MCF 10A (cell line): ENCODE measurements at regions of chr2 and their contacts with region 1.

Region 1: GRCh38 chr2:199339891-199340605 is 117.7 kb downstream of the SATB2 start:
- DNase-seq: no peak
- H3K4me3 Mint-ChIP-seq: no peak overlapping the region
- H3K27ac Mint-ChIP-seq: no peak overlapping the region
- H3K4me1 Mint-ChIP-seq: no peaks in the 10 kb centered on the region
- H3K27me3 Mint-ChIP-seq: no peaks in the 10 kb centered on the region
- CTCF ChIP-seq: no peak

Region 2: DNA sequence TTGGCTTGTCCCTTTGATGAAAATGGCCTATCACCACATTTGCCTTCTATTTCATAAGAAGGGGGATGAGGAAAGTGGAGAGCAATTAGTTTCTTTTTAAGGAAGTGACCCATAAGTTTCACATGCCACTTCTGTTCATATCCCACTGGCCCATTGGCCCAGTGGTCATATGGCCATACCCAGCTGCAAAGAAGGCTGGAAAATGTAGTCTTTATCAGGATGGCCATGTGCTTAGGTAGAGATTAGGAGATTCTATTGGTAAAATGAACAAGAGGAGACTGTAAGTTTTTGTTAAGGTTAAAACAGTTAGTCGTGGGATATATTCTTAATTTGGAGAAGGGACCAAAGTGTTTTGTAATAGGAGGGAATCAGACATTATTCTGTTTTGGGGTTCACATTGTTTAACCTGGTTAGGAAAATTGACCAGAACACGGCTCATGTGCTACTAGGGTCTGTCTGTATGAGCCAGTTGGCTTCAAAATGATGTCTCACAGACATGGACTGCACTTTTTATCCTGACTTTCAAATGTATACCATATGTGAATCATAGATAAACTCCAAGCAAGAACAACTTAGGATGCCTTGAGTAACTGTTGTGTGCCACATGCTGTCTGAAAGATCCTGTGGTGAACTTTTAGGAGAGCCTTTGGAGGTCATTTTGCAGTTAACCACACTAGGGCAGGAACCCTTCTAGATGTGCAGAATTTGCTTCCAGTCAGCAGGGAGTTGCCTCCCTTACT is 1518.3 kb before region 1 on chr2:
- CTCF ChIA-PET with region 1: no interaction called
- POLR2A ChIA-PET with region 1: no interaction called
- intact Hi-C with region 1: loop called (anchors 5 kb)
- DNase-seq: no peak
- H3K4me3 Mint-ChIP-seq: no peak overlapping the region
- H3K27ac Mint-ChIP-seq: no peak overlapping the region
- H3K4me1 Mint-ChIP-seq: no peaks in the 10 kb centered on the region
- H3K27me3 Mint-ChIP-seq: no peaks in the 10 kb centered on the region
- CTCF ChIP-seq: no peak

Region 3: DNA sequence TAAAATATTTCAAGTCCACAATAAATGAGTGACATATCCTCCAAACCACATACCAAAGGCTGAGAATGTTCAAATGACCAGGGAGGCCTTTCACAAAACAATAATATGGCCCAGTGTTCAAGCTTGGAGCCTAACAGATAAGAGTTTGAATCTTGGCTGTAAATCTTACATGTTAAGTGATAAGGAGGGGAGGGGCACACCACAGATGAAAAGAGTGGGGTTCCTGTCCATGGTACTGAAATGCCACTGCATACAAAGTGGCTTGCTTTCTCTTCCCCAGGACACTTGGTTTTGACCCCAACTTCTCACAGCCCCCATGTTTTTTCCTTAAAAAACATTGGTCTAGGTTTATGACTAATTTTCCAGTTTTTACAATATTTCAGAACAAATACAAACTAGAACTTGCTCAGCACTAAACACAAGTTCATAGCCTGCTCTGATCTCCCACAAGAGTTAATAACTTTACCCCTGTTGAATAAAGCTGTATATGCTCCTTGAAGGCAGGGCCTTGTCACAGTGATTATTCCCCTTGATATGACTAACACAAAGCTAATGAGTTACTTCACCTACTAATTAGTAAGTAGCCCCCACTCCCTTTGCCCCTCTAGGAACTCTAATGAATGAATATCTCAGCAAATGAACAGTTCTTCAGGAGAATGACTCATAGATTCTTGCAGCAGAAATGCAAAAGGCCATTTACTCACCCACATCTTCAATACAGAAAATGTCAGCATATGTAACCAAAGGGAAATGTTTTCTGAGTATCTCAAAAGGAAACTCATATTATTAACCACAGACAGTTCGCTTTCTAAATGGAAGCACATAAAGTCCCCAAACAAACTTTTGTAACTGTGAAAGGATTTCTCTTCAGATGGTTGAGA is 24.5 kb before region 1 on chr2:
- CTCF ChIA-PET with region 1: no interaction called
- POLR2A ChIA-PET with region 1: no interaction called
- intact Hi-C with region 1: no loop called
- DNase-seq: peak; percentile 31
- H3K4me3 Mint-ChIP-seq: no peak overlapping the region
- H3K27ac Mint-ChIP-seq: no peak overlapping the region
- H3K4me1 Mint-ChIP-seq: no peaks in the 10 kb centered on the region
- H3K27me3 Mint-ChIP-seq: no peaks in the 10 kb centered on the region
- CTCF ChIP-seq: no peak

Region 4: GRCh38 chr2:199329466-199329865 is 10.6 kb before region 1 on chr2:
- CTCF ChIA-PET with region 1: no interaction called
- POLR2A ChIA-PET with region 1: no interaction called
- intact Hi-C with region 1: no loop called
- DNase-seq: no peak
- H3K4me3 Mint-ChIP-seq: no peak overlapping the region
- H3K27ac Mint-ChIP-seq: no peak overlapping the region
- H3K4me1 Mint-ChIP-seq: no peaks in the 10 kb centered on the region
- H3K27me3 Mint-ChIP-seq: no peaks in the 10 kb centered on the region
- CTCF ChIP-seq: no peak